SK-N-SH (cell line): ENCODE measurements at regions of chr1 and their contacts with region 1.

Region 1: GRCh38 chr1:30707412-30708360 is 15.7 kb downstream of the MATN1 start:
- DNase-seq: peak; percentile 90
- H3K4me3 ChIP-seq: no peak overlapping the region; a peak in 1 of 4 replicates
- H3K27ac ChIP-seq: peak overlapping the region in 1 of 2 experiments; percentile 16; a peak in 1 of 4 replicates
- H3K4me1 ChIP-seq: peaks cover 0 to 16% of the 10 kb centered on the region in 2 experiments; a peak in 2 of 4 replicates
- H3K27me3 ChIP-seq: no peaks in the 10 kb centered on the region; the same call in 1 of the 2 replicates
- CTCF ChIP-seq: peak; percentile 92
- EP300 ChIP-seq: no peak; a peak in 1 of 4 replicates
- RAD21 ChIP-seq: peak; percentile 100

Region 2: DNA sequence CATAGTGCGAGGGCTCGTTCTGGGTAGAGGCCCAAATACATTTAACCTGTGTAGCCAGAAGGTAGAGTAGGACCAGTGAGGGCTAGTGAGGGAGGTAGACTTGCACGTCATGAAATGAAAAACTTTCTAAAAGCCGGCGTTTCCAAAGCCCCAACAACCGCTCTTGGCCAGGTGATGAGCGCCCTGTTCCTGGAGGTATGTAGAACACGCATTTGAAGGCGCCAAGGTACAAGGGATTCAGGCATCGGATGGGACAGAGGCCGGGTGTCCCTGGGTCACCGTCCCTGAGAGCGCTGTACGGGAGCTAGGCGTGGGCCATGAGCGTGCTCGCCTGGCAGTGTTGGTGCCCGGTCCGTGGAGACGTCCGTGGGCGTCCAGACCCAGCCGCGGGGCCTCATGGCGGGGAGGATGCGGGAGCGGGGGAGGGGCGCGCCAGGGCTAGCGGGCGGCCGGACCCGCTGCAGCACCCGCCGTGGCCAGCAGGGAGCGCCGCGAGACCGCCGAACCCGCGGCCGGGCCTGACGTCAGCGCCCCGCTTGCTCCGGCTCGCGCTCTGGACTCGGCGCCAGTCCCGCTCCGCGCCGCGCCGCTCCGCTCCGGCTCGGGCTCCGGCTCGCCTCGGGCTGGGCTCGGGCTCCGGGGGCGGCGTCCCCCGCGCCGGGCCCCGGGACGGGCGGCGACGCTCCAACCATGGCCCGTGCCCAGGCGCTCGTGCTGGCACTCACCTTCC is 1471.6 kb before region 1 on chr1 and contains the start of gene PTPRU:
- CTCF ChIA-PET with region 1: interaction called, 12 read pairs
- POLR2A ChIA-PET with region 1: no interaction called
- DNase-seq: peak; percentile 98
- H3K4me3 ChIP-seq: peak within 1 kb of the TSS; percentile 49 to 89
- H3K27ac ChIP-seq: peak within 1 kb of the TSS in 1 of 2 experiments; percentile 29; a peak in 1 of 4 replicates
- H3K4me1 ChIP-seq: peaks cover 6 to 37% of the 10 kb centered on the region in 2 experiments; a peak in 2 of 4 replicates
- H3K27me3 ChIP-seq: peaks cover 6% of the 10 kb centered on the region
- CTCF ChIP-seq: peak; percentile 58
- EP300 ChIP-seq: no peak
- RAD21 ChIP-seq: peak; percentile 86
- polyA plus RNA-seq, gene PTPRU: 2.9 and 3.5 TPM in 2 replicates

Region 3: GRCh38 chr1:30095451-30096025 is 612.1 kb before region 1 on chr1:
- CTCF ChIA-PET with region 1: interaction called, 10 read pairs
- POLR2A ChIA-PET with region 1: no interaction called
- DNase-seq: no peak
- H3K4me3 ChIP-seq: no peak overlapping the region
- H3K27ac ChIP-seq: no peak overlapping the region
- H3K4me1 ChIP-seq: peaks cover 0 to 11% of the 10 kb centered on the region in 2 experiments; a peak in 1 of 4 replicates
- H3K27me3 ChIP-seq: no peaks in the 10 kb centered on the region
- CTCF ChIP-seq: no peak
- EP300 ChIP-seq: no peak
- RAD21 ChIP-seq: no peak

Region 4: DNA sequence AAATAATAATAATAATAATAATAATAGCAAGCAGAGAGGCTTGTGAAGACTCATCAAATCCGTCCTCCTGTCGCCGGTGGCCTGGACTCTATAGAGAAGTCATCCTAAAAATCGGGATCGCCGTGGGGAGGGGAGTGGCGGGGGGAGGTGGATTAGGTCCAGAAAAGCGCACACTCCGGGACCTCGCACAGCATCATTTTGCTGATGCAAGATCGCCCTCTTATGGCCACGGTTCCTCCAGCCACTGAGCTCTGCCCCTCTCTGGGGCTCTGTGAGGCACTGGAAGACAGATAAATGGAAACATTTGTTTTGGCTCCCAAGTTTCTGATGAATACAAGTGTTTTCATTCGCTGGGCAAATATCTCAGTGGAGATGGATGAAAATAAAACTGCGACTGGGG is 596.3 kb before region 1 on chr1:
- CTCF ChIA-PET with region 1: interaction called, 18 read pairs
- POLR2A ChIA-PET with region 1: no interaction called
- DNase-seq: peak; percentile 76
- H3K4me3 ChIP-seq: no peak overlapping the region
- H3K27ac ChIP-seq: no peak overlapping the region
- H3K4me1 ChIP-seq: peaks cover 0 to 23% of the 10 kb centered on the region in 2 experiments; a peak in 3 of 4 replicates
- H3K27me3 ChIP-seq: no peaks in the 10 kb centered on the region
- CTCF ChIP-seq: peak; percentile 63
- EP300 ChIP-seq: no peak
- RAD21 ChIP-seq: peak; percentile 87

Region 5: GRCh38 chr1:30353637-30354036 is 354.0 kb before region 1 on chr1:
- CTCF ChIA-PET with region 1: interaction called, 13 read pairs
- POLR2A ChIA-PET with region 1: no interaction called
- DNase-seq: no peak
- H3K4me3 ChIP-seq: no peak overlapping the region
- H3K27ac ChIP-seq: no peak overlapping the region
- H3K4me1 ChIP-seq: no peaks in the 10 kb centered on the region
- H3K27me3 ChIP-seq: no peaks in the 10 kb centered on the region
- CTCF ChIP-seq: no peak
- EP300 ChIP-seq: no peak
- RAD21 ChIP-seq: peak; percentile 46

Region 6: GRCh38 chr1:30506291-30507015 is 201.2 kb before region 1 on chr1:
- CTCF ChIA-PET with region 1: no interaction called
- POLR2A ChIA-PET with region 1: no interaction called
- DNase-seq: no peak
- H3K4me3 ChIP-seq: no peak overlapping the region
- H3K27ac ChIP-seq: no peak overlapping the region
- H3K4me1 ChIP-seq: peaks cover 0 to 2% of the 10 kb centered on the region in 2 experiments; a peak in 1 of 4 replicates
- H3K27me3 ChIP-seq: no peaks in the 10 kb centered on the region
- CTCF ChIP-seq: no peak
- EP300 ChIP-seq: no peak
- RAD21 ChIP-seq: no peak

Region 7: DNA sequence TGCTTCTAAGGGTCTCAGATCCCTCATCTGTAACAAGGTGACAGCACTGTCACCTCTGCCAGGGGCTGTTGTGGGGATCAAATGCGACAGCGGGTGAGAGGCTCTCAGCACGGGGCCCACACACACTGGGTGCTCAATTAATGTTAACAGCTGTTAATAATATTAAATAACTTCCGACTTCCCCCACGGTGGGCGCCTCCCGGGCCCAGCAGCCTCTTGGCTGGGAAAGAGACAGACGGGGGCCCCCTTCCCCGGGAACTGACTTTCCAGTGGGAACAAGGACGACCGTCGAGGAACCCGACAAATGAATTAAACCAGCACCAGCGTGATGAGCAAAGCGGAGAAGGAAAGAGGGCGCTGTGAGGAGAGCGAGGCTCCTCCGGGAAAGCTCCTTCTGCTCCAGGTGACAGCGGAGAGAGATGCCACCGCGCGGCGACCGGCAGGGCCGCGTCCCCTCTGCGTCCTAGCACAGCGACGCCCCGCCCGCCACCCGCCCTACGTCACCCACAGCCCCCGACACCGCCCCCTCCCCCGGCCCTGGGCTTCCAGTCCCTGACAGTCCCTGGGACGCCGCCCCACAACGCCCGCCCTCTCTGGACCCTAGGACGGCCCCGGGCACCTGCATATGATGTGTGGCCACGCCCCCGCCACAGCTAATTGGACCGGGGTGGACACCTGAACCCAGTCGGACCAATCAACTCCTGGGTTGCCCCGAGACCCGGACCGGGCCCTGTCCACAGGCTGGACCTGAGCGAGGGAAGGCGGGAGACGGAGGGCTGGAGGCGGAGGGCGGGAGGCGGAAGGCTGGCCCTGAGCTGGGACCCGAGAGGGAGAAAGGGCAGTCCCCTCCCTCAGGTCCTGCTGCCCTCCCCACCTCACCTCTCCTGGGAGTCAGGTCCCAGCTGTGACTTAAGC is 22.5 kb before region 1 on chr1:
- CTCF ChIA-PET with region 1: interaction called, 16 read pairs
- POLR2A ChIA-PET with region 1: no interaction called
- DNase-seq: peak; percentile 77
- H3K4me3 ChIP-seq: no peak overlapping the region
- H3K27ac ChIP-seq: no peak overlapping the region
- H3K4me1 ChIP-seq: peaks cover 0 to 14% of the 10 kb centered on the region in 2 experiments; a peak in 2 of 4 replicates
- H3K27me3 ChIP-seq: peaks cover 6% of the 10 kb centered on the region; the same call in 1 of the 2 replicates
- CTCF ChIP-seq: no peak
- EP300 ChIP-seq: no peak
- RAD21 ChIP-seq: no peak

Region 8: DNA sequence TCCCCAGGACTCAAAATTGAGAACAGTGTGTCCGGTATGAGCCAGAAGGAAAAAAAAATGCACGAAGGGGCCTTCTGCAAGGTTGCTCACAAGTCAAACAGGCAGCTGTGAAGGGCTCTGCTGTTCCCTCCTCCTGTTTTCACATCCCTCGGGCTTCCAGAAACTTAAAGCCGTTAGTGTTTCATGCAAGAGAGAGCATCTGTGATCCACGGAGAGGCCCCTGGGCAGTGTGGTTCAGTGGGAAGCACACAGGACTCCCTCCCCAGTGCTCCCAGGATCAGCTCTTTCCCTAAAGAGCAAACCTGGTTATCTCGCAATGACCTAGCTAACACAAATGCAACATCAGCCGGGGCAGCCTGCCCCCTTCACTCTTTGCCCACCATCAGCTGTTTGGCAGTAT is 18.6 kb after region 1 on chr1:
- CTCF ChIA-PET with region 1: no interaction called
- POLR2A ChIA-PET with region 1: no interaction called
- DNase-seq: no peak
- H3K4me3 ChIP-seq: no peak overlapping the region
- H3K27ac ChIP-seq: no peak overlapping the region
- H3K4me1 ChIP-seq: peaks cover 3 to 6% of the 10 kb centered on the region in 2 experiments; a peak in 3 of 4 replicates
- H3K27me3 ChIP-seq: no peaks in the 10 kb centered on the region
- CTCF ChIP-seq: no peak
- EP300 ChIP-seq: no peak
- RAD21 ChIP-seq: no peak